Activated CD4-positive, alpha-beta T cell treated with anti-CD3 and anti-CD28 coated beads, Interleukin-2, amount 10 ng/mL, durations not matched to agents 24 days and 14 days (primary cell): ENCODE measurements at regions of chr11 and their contacts with region 1.

Region 1: GRCh38 chr11:1335811-1336761 is 26.7 kb upstream of the TOLLIP start:
- DNase-seq: peak; percentile 86
- H3K4me3 Mint-ChIP-seq: peak overlapping the region; percentile 80
- H3K27ac Mint-ChIP-seq: peak overlapping the region; percentile 80
- H3K4me1 Mint-ChIP-seq: peaks cover 13% of the 10 kb centered on the region
- H3K27me3 Mint-ChIP-seq: peaks cover 18% of the 10 kb centered on the region

Region 2: DNA sequence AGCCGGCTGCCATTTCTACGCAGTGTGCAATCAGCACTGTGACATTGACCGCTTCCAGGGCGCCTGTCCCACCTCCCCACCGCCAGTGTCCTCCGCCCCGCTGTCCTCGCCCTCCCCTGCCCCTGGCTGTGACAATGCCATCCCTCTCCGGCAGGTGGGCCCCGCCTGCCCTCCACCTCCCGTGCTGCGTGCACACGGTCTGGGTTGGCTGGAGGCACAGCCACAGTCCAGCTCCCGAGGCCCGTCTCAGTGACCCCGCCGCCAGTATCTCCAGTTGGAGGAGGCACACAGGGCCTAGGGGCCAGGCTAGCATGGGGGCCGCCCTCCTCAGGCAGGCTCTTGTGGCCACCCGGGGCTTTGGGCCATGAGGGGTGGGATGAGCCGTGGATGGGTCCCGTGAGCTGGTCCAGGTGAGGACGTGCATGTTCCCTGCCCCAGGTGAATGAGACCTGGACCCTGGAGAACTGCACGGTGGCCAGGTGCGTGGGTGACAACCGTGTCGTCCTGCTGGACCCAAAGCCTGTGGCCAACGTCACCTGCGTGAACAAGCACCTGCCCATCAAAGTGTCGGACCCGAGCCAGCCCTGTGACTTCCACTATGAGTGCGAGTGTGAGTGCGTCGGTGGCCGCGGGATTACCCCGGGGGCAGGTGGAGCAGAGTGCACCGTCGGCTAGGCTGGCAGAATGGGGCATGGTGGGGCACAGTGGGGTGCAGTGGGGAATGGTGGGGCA is 83.5 kb before region 1 on chr11:
- intact Hi-C with region 1: no loop called
- DNase-seq: no peak
- H3K4me3 Mint-ChIP-seq: no peak overlapping the region
- H3K27ac Mint-ChIP-seq: no peak overlapping the region
- H3K4me1 Mint-ChIP-seq: no peaks in the 10 kb centered on the region
- H3K27me3 Mint-ChIP-seq: no peaks in the 10 kb centered on the region

Region 3: GRCh38 chr11:1389103-1389931 is 53.2 kb after region 1 on chr11:
- intact Hi-C with region 1: loop called (anchors 2 kb)
- DNase-seq: peak; percentile 98
- H3K4me3 Mint-ChIP-seq: peak overlapping the region; percentile 59
- H3K27ac Mint-ChIP-seq: no peak overlapping the region
- H3K4me1 Mint-ChIP-seq: peaks cover 10% of the 10 kb centered on the region
- H3K27me3 Mint-ChIP-seq: peaks cover 42% of the 10 kb centered on the region